ENCODE measurements at regions of chr18 and their contacts with region 1.

Region 1: GRCh38 chr18:76281565-76281964 is 213.5 kb downstream of the ZNF516 start:
- DNase-seq: no peak
- H3K4me3 Mint-ChIP-seq: no peak overlapping the region
- H3K27ac Mint-ChIP-seq: no peak overlapping the region
- H3K4me1 Mint-ChIP-seq: no peaks in the 10 kb centered on the region
- H3K27me3 Mint-ChIP-seq: peaks cover 63% of the 10 kb centered on the region
- CTCF ChIP-seq: no peak

Region 2: DNA sequence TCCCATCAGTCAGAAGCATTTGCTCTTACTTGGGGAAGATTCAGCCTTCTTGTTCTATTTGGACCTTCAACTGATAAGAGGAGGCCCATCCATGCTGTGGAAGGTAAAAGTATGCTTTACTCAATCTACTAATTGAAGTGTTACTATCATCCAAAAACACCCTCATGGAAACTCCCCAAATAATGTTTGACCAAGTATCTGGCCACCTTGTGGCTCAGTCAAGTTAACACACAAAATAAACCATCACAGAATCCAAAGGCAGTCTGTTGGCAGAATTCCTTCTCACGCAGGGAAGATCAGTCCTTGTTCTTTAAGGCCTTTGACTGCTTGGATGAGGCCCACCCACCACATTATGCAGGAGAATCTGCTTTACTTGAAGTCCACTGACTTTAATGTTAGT is 322.9 kb before region 1 on chr18:
- CTCF ChIA-PET with region 1: no interaction called
- intact Hi-C with region 1: no loop called
- DNase-seq: no peak
- H3K4me3 Mint-ChIP-seq: no peak overlapping the region
- H3K27ac Mint-ChIP-seq: no peak overlapping the region
- H3K4me1 Mint-ChIP-seq: no peaks in the 10 kb centered on the region
- H3K27me3 Mint-ChIP-seq: no peaks in the 10 kb centered on the region
- CTCF ChIP-seq: no peak

Region 3: DNA sequence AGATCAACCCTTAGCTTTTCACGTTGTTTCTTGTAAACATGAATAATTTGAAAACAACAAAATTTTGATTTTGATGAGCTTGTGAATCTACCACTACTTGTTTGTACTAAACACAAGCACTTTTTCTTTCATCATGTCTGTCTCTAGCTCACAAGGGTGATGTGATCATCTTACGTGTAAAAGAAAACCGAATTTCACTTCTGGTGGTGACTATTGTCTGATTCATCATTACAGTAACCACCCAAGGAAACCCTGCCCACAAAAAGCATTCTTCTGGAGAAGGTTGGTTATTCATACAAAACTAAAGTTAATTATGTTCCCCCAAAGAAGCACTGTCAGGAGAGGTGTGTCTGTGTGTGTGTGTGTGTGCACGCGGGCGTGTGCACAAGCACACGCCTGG is 72.0 kb before region 1 on chr18:
- CTCF ChIA-PET with region 1: no interaction called
- intact Hi-C with region 1: no loop called
- DNase-seq: no peak
- H3K4me3 Mint-ChIP-seq: no peak overlapping the region
- H3K27ac Mint-ChIP-seq: no peak overlapping the region
- H3K4me1 Mint-ChIP-seq: no peaks in the 10 kb centered on the region
- H3K27me3 Mint-ChIP-seq: peaks cover 16% of the 10 kb centered on the region
- CTCF ChIP-seq: no peak

Region 4: DNA sequence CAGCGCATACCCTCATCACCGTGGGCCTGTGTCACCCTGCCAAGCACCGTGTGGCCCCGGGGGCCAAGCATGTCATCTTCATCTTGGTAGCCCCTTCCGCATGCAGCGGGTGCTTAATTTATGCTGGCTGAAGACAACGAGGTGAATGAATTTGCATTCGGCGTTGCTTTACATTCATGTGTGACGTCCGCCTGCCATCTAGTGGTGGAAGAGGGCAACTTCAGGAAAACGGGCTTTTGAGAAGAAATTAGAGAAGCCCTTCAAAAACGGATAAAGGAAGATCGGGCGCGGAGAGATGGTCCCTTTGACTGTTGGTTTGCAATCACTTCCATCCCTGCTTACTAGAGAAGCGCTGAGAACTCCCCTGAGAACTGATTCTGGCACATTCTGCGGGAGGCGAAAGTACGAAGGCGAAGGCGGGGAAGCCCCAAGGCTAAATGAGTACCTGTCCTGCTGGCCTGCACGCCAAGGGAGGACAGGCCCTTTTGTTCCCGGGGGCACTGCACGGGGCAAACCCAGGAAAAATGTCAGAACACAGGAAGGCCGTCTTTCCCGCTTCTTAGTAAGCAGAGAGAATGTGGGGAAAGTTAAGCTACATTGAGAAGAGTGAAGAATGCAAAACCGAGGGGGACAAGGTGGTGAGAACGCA is 67.6 kb after region 1 on chr18:
- CTCF ChIA-PET with region 1: no interaction called
- intact Hi-C with region 1: loop called (anchors 5 kb)
- DNase-seq: peak; percentile 70
- H3K4me3 Mint-ChIP-seq: peak overlapping the region; percentile 58
- H3K27ac Mint-ChIP-seq: peak overlapping the region; percentile 43
- H3K4me1 Mint-ChIP-seq: peaks cover 33% of the 10 kb centered on the region
- H3K27me3 Mint-ChIP-seq: no peaks in the 10 kb centered on the region
- CTCF ChIP-seq: peak; percentile 81

Region 5: GRCh38 chr18:76459687-76460350 is 178.3 kb after region 1 on chr18:
- CTCF ChIA-PET with region 1: no interaction called
- intact Hi-C with region 1: no loop called
- DNase-seq: peak; percentile 73
- H3K4me3 Mint-ChIP-seq: peak overlapping the region; percentile 32
- H3K27ac Mint-ChIP-seq: peak overlapping the region; percentile 63
- H3K4me1 Mint-ChIP-seq: peaks cover 24% of the 10 kb centered on the region
- H3K27me3 Mint-ChIP-seq: no peaks in the 10 kb centered on the region
- CTCF ChIP-seq: no peak